ENCODE measurements at regions of chr1 and their contacts with region 1.

Region 1: GRCh38 chr1:66443793-66444192 is 90.2 kb upstream of the SGIP1 start:
- DNase-seq: no peak
- H3K4me3 ChIP-seq: no peak overlapping the region
- CTCF ChIP-seq: no peak
- POLR2A ChIP-seq: no peak

Region 2: GRCh38 chr1:66255900-66256299 is 187.9 kb before region 1 on chr1:
- intact Hi-C with region 1: loop called (anchors 2 kb)
- DNase-seq: no peak
- H3K4me3 ChIP-seq: no peak overlapping the region
- CTCF ChIP-seq: no peak
- POLR2A ChIP-seq: no peak

Region 3: DNA sequence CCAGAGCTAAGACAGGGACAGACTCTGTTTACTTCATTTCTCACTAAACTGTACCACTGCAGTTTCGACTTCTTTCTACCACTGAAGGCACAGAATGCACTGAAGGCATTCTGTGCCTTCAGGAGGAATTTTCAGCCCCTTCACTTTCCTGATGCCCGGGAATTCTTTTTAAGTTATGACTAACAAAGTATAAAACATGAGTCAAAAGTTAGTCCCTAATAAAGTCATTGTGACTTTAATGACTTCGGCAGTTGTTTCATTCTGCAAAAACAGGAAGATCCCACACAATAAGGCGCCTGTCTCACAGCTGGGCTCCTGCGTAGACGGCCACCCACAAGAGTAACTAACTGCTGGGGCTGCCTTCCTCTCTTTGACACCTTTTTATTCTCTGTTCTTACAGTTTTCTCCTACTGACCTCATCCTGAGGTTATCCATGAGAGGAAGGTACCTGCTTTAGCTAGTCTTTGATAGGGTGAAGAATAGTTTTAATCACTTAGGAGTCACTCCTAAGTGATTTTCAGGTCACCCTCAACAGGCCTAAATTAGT is 93.7 kb before region 1 on chr1:
- intact Hi-C with region 1: no loop called
- DNase-seq: no peak
- H3K4me3 ChIP-seq: no peak overlapping the region
- CTCF ChIP-seq: no peak
- POLR2A ChIP-seq: no peak

Region 4: GRCh38 chr1:66413136-66413837 is 30.5 kb before region 1 on chr1:
- intact Hi-C with region 1: no loop called
- DNase-seq: no peak
- H3K4me3 ChIP-seq: no peak overlapping the region
- CTCF ChIP-seq: no peak
- POLR2A ChIP-seq: no peak

Region 5: GRCh38 chr1:66478116-66478515 is 34.3 kb after region 1 on chr1:
- intact Hi-C with region 1: no loop called
- DNase-seq: no peak
- H3K4me3 ChIP-seq: no peak overlapping the region
- CTCF ChIP-seq: no peak
- POLR2A ChIP-seq: no peak

Region 6: DNA sequence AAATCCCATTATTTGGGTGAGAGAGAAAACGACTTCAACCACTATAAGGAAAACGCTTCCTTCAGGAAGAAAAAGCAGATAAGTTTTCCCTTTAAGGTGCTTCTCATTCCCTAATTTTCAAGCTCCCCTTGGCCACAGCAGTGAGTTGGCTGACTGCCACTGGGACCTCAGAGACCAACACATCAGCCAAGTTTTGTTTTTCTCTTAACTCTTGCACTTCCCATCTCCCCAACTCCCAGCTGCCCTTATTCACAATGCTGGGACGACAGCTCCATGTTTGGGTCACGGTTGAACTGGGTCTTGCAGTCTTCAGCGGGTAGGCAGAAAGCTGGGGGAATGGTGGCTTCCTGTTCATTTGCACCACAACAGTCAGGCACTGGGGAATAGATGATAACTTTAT is 109.0 kb after region 1 on chr1:
- intact Hi-C with region 1: no loop called
- DNase-seq: no peak
- H3K4me3 ChIP-seq: no peak overlapping the region
- CTCF ChIP-seq: no peak
- POLR2A ChIP-seq: no peak